Activated CD4-positive, alpha-beta T cell treated with anti-CD3 and anti-CD28 coated beads for 36 hours (primary cell): ENCODE measurements at regions of chr11 and their contacts with region 1.

Region 1: GRCh38 chr11:35013514-35014233 is 97.3 kb downstream of the PDHX start:
- DNase-seq: peak; percentile 54
- ATAC-seq: peak; percentile 75
- H3K4me3 Mint-ChIP-seq: peak overlapping the region; percentile 34
- H3K27ac Mint-ChIP-seq: peak overlapping the region; percentile 74
- H3K4me1 Mint-ChIP-seq: peaks cover 49% of the 10 kb centered on the region
- H3K27me3 Mint-ChIP-seq: peaks cover 2% of the 10 kb centered on the region

Region 2: DNA sequence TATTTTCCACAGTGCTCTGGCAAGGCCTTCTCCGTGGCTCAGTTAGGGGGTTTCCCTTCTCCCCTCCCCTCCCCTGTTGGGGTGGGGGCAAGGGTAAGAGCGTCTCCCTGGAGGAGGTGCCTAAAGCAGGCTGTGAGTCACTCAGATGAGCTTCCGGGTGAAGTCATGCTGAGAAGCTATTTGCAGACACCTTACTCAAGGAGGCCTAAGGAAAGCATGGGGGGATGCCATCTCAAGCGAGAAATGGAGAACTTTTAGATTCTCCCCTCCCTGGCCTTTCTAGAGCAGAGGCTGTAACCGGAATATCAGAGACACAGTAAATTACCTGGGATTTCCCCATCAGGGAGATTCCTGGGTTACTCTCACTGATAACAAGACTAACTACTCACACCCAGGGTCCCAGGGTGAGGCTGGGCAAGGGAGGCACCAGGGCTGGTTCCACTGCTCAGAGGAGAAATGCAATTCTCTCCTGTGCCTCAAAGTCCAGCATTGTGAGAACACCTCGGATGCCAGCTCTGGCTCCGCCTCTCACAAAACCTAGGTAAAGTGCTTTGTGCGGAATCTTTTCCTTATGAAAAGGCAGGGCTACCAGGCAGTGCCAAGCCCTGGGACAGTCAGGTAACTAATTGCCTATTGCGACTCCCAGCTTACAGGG is 779.5 kb before region 1 on chr11:
- CTCF ChIA-PET with region 1: no interaction called
- POLR2A ChIA-PET with region 1: no interaction called
- intact Hi-C with region 1: loop called in 1 of 2 experiments (anchors 10 kb)
- DNase-seq: peak; percentile 89
- ATAC-seq: peak; percentile 93
- H3K4me3 Mint-ChIP-seq: peak overlapping the region; percentile 16
- H3K27ac Mint-ChIP-seq: peak overlapping the region; percentile 72
- H3K4me1 Mint-ChIP-seq: peaks cover 44% of the 10 kb centered on the region
- H3K27me3 Mint-ChIP-seq: peaks cover 3% of the 10 kb centered on the region

Region 3: GRCh38 chr11:35030716-35031213 is 17.1 kb after region 1 on chr11:
- CTCF ChIA-PET with region 1: interaction called, 16 read pairs
- POLR2A ChIA-PET with region 1: interaction called, 9 read pairs
- intact Hi-C with region 1: loop called (anchors 1 kb)
- DNase-seq: peak; percentile 67
- ATAC-seq: peak; percentile 71
- H3K4me3 Mint-ChIP-seq: peak overlapping the region; percentile 50
- H3K27ac Mint-ChIP-seq: peak overlapping the region; percentile 93
- H3K4me1 Mint-ChIP-seq: peaks cover 56% of the 10 kb centered on the region
- H3K27me3 Mint-ChIP-seq: no peaks in the 10 kb centered on the region

Region 4: DNA sequence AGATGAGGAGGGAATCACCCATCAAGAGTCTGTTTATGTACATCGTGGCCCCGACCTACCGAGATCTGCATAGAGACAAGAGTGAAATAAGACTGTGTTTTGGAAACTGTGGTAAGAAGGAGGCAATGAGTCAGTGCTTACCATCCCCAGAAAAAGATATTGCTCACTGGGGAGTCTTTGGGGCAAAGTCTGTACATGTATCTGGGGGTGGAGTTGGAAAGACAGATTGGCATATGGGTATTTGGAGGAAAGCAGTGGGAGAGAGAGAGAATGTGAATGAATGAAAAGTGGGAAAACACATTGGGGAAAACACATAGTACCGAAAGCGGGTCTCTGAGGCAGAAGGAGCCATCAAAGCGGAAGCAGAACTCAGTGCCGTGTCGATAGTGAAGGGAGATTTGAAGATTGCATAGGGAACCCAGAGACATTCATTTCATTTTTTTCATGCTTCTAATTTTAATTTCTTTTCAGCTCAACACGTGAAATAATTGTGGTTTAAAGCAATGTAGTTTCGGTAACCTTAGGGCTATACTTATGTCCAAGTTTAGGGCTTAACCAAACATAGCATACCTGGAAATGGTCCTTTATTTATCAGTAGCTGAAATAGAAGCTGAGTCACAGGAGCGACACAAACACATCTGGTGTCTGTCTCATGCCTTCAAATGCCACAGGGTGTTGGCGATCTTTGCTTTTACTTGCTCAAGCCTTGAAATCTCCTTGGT is 26.7 kb after region 1 on chr11:
- CTCF ChIA-PET with region 1: interaction called, 7 read pairs
- POLR2A ChIA-PET with region 1: interaction called, 7 read pairs
- intact Hi-C with region 1: loop called (anchors 1 kb)
- DNase-seq: peak; percentile 78
- ATAC-seq: peak; percentile 86
- H3K4me3 Mint-ChIP-seq: peak overlapping the region; percentile 79
- H3K27ac Mint-ChIP-seq: peak overlapping the region; percentile 98
- H3K4me1 Mint-ChIP-seq: peaks cover 80% of the 10 kb centered on the region
- H3K27me3 Mint-ChIP-seq: peaks cover 2% of the 10 kb centered on the region

Region 5: GRCh38 chr11:35066783-35067423 is 53.2 kb after region 1 on chr11:
- CTCF ChIA-PET with region 1: interaction called, 4 read pairs
- POLR2A ChIA-PET with region 1: no interaction called
- intact Hi-C with region 1: loop called in 1 of 2 experiments (anchors 2 kb)
- DNase-seq: peak; percentile 61
- ATAC-seq: peak; percentile 85
- H3K4me3 Mint-ChIP-seq: peak overlapping the region; percentile 15
- H3K27ac Mint-ChIP-seq: peak overlapping the region; percentile 73
- H3K4me1 Mint-ChIP-seq: peaks cover 32% of the 10 kb centered on the region
- H3K27me3 Mint-ChIP-seq: peaks cover 3% of the 10 kb centered on the region

Region 6: DNA sequence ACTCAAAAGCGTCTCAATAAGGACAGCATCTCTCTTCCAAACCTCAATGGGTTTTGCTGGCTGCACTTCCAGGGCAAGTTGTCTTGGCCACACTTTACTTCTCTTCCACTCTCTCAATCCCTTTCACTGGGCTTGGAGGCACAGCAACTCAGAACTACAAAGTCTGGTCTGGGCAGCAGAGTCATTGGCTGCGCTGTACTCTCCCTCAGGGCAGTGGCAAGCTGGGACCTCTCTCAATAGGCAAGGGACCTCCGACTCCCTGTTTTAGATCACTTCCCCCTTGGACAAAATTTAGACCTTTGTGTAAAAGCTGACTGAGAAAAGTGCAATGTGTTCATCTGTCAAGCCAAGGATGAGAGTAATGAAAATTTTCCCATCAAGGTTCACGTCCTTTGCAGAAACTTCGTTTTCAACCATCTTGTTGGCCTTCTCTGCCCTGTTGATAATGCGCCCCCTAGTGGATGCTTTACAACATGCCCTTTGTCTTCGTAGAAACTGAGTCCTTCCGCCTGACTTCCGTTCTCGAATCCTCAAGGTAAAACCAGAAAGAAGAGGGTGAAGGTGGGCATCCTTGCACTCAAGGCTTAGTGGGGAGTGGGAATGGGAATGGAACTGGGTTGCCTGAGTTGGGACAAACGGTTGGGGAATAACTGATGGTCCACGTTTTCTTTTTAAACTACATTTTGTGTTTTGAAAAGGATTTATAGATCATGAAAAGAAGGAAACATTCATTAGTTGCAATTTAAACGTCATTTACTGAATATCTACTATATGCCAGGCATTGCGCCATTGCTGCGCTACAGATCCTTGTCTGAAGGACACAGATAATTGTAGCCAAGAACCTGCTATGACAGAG is 224.4 kb after region 1 on chr11:
- CTCF ChIA-PET with region 1: interaction called, 3 read pairs
- POLR2A ChIA-PET with region 1: no interaction called
- intact Hi-C with region 1: loop called in 1 of 2 experiments (anchors 5 kb)
- DNase-seq: peak; percentile 78
- ATAC-seq: no peak
- H3K4me3 Mint-ChIP-seq: no peak overlapping the region
- H3K27ac Mint-ChIP-seq: peak overlapping the region; percentile 74
- H3K4me1 Mint-ChIP-seq: peaks cover 68% of the 10 kb centered on the region
- H3K27me3 Mint-ChIP-seq: no peaks in the 10 kb centered on the region

Region 7: DNA sequence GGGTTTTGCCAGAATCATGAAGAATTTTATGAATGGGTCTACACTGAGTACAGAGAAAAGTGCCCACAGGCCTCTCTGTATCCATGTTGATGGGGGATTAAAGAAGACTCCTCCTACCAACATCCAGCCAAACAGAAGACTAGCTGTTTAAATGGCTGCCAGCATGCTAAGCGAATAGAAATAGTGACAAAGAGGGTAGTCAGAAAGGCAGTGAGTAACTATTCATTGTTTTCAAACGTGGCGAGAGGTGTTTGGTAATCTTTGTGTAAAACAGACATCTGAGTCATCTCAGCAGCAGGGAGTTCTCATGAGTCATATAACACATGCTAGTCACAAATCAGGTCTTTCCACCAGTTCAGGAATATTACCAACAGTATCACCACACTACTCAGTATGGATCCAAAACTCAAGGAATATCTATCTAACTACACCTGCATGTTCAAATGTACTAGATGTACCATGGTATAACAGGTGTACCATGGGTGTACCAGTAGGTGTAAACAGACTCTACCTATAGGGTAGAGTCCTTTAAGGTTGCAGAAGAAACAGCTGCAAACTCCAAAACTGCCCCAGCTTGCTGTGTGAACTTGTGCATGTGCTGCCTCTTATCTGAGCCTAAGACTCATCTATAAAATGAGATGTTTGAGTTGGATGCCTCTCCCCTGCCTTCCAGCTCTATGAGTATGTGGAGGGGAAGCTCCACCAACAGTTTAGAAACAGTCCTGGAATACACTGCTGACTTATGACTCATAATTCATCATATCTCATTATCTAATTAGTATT is 323.7 kb after region 1 on chr11:
- CTCF ChIA-PET with region 1: no interaction called
- POLR2A ChIA-PET with region 1: no interaction called
- intact Hi-C with region 1: loop called (anchors 1 to 5 kb)
- DNase-seq: peak; percentile 46
- ATAC-seq: peak; percentile 96
- H3K4me3 Mint-ChIP-seq: no peak overlapping the region
- H3K27ac Mint-ChIP-seq: peak overlapping the region; percentile 19
- H3K4me1 Mint-ChIP-seq: peaks cover 36% of the 10 kb centered on the region
- H3K27me3 Mint-ChIP-seq: no peaks in the 10 kb centered on the region